ENCODE measurements at regions of chr2 and their contacts with region 1.

Region 1: DNA sequence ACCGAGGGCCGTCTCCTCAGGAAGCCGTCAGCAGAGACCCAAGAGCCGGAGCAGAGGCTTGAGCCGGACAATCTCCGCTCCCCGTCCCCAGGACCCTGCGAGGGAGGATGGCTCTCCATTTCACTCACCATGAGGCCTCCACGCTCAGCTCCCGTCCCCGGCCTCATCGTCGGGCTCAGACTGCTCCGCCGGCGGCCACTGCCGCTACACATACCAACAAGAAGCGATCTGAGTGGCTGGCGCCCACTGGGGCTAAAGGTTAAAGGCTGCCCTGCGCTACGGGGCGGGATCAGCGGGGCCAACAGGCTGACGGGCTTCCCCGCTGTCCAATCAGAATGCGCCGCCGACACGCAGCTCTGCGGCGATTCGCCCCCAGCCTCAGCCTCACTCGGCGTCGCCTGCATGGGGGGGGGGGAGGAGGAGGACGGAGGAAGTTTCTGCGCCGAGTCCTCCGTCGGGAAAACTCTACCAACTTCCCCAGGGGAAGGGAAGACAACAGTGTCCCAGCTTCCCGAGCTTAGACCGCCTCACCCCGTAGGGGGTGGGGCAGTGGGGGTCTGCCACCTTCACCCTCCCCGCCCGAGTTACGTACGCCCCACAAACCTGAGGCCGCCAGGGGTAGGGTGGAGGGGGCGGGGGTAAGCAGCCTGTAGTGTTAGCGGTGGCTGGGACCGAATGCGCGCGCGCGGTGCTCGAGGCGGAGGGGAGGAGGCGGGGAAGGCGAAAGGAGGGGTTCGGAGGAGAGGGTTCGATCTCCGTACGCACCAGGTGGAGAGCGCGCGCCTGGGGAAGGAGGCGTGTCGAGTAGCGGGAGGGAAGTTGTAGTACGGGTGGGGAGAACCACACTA is at the start of gene PRPF40A:
- DNase-seq: peak; percentile 100
- H3K4me3 Mint-ChIP-seq: peak within 1 kb of the TSS; percentile 98
- H3K27ac Mint-ChIP-seq: peak within 1 kb of the TSS; percentile 98
- H3K4me1 Mint-ChIP-seq: peaks cover 48% of the 10 kb centered on the region
- H3K27me3 Mint-ChIP-seq: peaks cover 2% of the 10 kb centered on the region
- total RNA-seq, gene PRPF40A: 166 TPM in 2 replicates

Region 2: GRCh38 chr2:152407204-152407721 is 310.2 kb before region 1 on chr2:
- intact Hi-C with region 1: loop called (anchors 10 kb)
- DNase-seq: peak; percentile 81
- H3K4me3 Mint-ChIP-seq: peak overlapping the region; percentile 78
- H3K27ac Mint-ChIP-seq: peak overlapping the region; percentile 91
- H3K4me1 Mint-ChIP-seq: peaks cover 54% of the 10 kb centered on the region
- H3K27me3 Mint-ChIP-seq: no peaks in the 10 kb centered on the region

Region 3: GRCh38 chr2:152694161-152694661 is 23.2 kb before region 1 on chr2:
- intact Hi-C with region 1: loop called (anchors 1 kb)
- DNase-seq: peak; percentile 81
- H3K4me3 Mint-ChIP-seq: peak overlapping the region; percentile 81
- H3K27ac Mint-ChIP-seq: peak overlapping the region; percentile 93
- H3K4me1 Mint-ChIP-seq: peaks cover 23% of the 10 kb centered on the region
- H3K27me3 Mint-ChIP-seq: no peaks in the 10 kb centered on the region

Region 4: GRCh38 chr2:152730591-152731303 is 13.3 kb after region 1 on chr2:
- intact Hi-C with region 1: loop called (anchors 1 kb)
- DNase-seq: peak; percentile 84
- H3K4me3 Mint-ChIP-seq: peak overlapping the region; percentile 32
- H3K27ac Mint-ChIP-seq: peak overlapping the region; percentile 2
- H3K4me1 Mint-ChIP-seq: peaks cover 22% of the 10 kb centered on the region
- H3K27me3 Mint-ChIP-seq: no peaks in the 10 kb centered on the region

Region 5: GRCh38 chr2:152762202-152762601 is 44.8 kb after region 1 on chr2:
- intact Hi-C with region 1: no loop called
- DNase-seq: no peak
- H3K4me3 Mint-ChIP-seq: no peak overlapping the region
- H3K27ac Mint-ChIP-seq: no peak overlapping the region
- H3K4me1 Mint-ChIP-seq: peaks cover 2% of the 10 kb centered on the region
- H3K27me3 Mint-ChIP-seq: no peaks in the 10 kb centered on the region